Common myeloid progenitor, CD34-positive (primary cell): ENCODE measurements at regions of chr9 and their contacts with region 1.

Region 1: GRCh38 chr9:128863647-128864046 is 18.1 kb downstream of the KYAT1 start:
- DNase-seq: peak; percentile 83 to 91 (median 89)
- H3K4me3 ChIP-seq: no peak overlapping the region
- H3K27ac ChIP-seq: no peak overlapping the region
- H3K4me1 ChIP-seq: peaks cover 0 to 3% (median 1%) of the 10 kb centered on the region in 4 experiments
- H3K27me3 ChIP-seq: no peaks in the 10 kb centered on the region

Region 2: DNA sequence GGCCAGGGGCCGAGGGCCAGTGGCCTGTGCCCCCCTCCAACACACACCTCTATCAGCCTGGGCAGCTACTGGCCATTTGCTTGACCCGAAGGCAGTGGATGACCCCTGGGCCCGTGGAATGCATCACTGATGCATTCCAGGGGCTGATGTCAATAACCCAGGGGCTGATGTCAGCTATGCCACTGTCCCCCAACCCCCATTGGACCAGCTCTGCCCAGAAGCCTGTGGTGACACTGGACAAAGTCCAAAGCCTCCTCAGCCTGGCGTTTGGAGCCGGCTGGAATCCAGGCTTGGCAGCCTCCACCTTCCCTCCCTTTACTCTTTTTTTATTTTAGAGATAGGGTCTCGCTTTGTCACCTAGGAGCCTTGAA is 12.1 kb after region 1 on chr9:
- CTCF ChIA-PET with region 1: interaction called, 79 read pairs
- POLR2A ChIA-PET with region 1: interaction called, 6 read pairs
- DNase-seq: no peak
- H3K4me3 ChIP-seq: no peak overlapping the region
- H3K27ac ChIP-seq: no peak overlapping the region
- H3K4me1 ChIP-seq: peaks cover 0 to 17% (median 2%) of the 10 kb centered on the region in 4 experiments
- H3K27me3 ChIP-seq: no peaks in the 10 kb centered on the region